ENCODE measurements at regions of chr3 and their contacts with region 1.

Region 1: DNA sequence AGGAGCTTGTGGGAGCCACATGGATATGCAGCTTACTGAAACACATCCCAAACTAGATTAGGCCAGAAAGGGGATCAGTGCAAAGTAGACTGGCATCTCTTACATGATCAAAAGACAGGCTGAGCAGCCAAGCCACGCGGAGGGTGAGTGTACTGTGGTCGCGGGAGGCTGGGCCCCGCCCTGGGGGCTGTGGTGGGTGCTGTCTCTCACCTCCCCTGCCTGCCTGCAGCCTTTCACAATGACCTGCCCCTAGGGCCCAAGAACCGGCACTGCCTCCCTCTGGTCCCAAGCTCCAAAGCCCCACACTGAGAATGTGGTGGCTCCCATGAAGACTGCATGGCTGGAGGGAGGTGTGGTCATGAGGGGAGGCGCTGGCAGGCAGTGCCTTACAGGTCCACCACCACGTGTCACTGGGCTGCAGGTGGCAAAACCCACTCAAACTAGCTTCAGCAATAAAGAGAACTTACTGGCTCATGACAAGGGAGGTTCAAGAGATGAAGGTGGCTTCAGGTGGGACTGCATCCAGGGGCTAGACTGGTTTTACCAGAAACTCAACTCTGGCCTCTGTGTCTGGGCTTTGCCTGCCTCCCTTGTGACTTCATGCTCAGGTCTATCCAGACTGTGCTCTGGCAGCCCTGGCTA is 27.4 kb upstream of the PLXND1 start:
- DNase-seq: no peak
- CTCF ChIP-seq: no peak

Region 2: GRCh38 chr3:129490242-129491045 is 143.4 kb before region 1 on chr3:
- in situ Hi-C with region 1: no loop called
- DNase-seq: peak; percentile 82
- CTCF ChIP-seq: peak; percentile 87

Region 3: DNA sequence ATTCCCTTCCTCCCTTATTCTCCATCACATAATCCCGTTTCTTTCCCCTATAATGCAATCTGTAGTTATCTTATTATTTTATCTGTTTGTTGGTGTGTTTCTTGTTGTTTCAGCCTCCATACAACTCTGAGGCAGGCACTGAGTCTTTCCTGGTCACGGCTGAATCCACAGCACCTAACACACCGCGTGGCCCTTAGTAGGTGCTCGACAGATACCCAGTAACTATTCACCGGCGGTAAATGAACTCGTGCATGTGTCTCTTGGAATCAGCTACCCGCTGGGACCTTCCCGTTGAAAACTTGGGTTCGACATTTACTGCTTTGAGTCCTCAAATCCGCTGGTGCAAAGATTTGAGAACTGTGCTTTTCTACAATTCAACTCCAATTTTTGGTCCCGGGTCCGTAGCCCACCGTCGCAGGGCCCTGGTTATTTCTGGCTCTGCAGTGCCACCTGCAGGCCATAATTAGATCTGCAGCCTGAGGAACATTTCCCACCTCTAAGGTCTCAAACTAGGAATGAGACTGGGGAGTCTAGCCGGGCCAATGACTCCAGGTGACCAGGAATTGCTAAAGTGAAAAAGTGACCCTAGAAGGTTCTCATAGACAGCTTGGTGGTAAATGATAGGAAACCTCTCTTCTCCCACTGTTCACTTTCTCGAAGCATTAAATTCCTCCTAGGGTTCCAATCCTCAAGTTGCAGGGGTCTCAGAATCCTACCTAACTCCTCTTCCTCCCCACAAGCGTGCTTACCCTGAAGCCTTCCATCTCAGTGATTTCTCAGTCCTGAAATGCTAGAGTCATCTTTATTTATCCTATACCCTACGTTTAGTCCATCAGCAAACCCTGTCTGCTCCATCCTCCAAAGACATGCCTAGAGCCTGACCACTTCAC is 300.6 kb after region 1 on chr3:
- in situ Hi-C with region 1: loop called (anchors 10 kb)
- DNase-seq: peak; percentile 60
- CTCF ChIP-seq: peak; percentile 91

Measured in GM13977 (cell line).